Gastrocnemius medialis (tissue), 4 donors: ENCODE measurements at regions of chr12 and their contacts with region 1.

Region 1: GRCh38 chr12:20369305-20370005 is 1.1 kb downstream of the PDE3A start:
- DNase-seq: peak; percentile 33 to 38
- ATAC-seq: peak; percentile 40 to 46
- H3K4me3 ChIP-seq: peak overlapping the region; percentile 69 to 75 (median 72)
- H3K27ac ChIP-seq: peak overlapping the region; percentile 66 to 84 (median 76)
- H3K4me1 ChIP-seq: peaks cover 0 to 3% of the 10 kb centered on the region in 2 donors
- H3K27me3 ChIP-seq: no peaks in the 10 kb centered on the region
- CTCF ChIP-seq: peak in 2 of 5 experiments; percentile 40 to 43
- POLR2A ChIP-seq: peak; percentile 39 to 55

Region 2: DNA sequence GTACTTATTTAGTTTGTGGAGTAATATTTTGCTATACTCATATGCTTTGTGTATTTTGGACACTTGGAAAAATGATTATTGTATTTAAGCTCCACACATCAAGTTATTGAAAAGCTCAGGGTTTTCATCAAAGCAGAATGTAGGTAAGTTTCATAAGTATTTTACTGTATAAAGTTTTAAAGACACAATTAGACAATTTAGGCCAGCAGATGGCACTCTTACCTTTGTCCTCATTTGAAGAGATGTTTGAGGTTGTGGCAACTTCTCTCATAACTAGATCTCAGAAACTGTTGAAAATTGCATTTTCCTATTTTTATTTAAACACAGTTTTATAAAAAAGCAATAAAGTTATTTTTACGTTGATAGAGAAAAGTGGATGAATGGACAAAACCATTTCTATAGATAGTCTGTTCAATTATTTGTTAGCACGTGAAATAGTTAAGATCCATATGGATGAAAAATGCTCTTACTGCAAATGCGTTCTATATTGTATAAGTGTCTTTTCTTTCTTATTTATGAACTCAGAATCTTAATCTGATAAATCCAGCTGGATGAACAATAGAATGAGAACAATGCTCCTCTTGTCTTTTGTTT is 630.2 kb before region 1 on chr12:
- in situ Hi-C with region 1: loop called in 1 of 4 experiments (anchors 25 kb)
- intact Hi-C with region 1: no loop called
- DNase-seq: no peak
- ATAC-seq: no peak
- H3K4me3 ChIP-seq: no peak overlapping the region
- H3K27ac ChIP-seq: no peak overlapping the region
- H3K4me1 ChIP-seq: peaks cover 0 to 2% of the 10 kb centered on the region in 2 donors
- H3K27me3 ChIP-seq: no peaks in the 10 kb centered on the region
- CTCF ChIP-seq: peak in 4 of 5 experiments; percentile 28 to 61 (median 52)
- POLR2A ChIP-seq: no peak

Region 3: GRCh38 chr12:20125276-20125798 is 244.1 kb before region 1 on chr12:
- in situ Hi-C with region 1: no loop called
- intact Hi-C with region 1: loop called (anchors 10 kb)
- DNase-seq: peak in 1 of 2 donors; percentile 15
- ATAC-seq: peak in 1 of 2 donors; percentile 33
- H3K4me3 ChIP-seq: no peak overlapping the region
- H3K27ac ChIP-seq: no peak overlapping the region
- H3K4me1 ChIP-seq: peaks cover 0 to 3% of the 10 kb centered on the region in 2 donors
- H3K27me3 ChIP-seq: no peaks in the 10 kb centered on the region
- CTCF ChIP-seq: no peak
- POLR2A ChIP-seq: no peak

Region 4: DNA sequence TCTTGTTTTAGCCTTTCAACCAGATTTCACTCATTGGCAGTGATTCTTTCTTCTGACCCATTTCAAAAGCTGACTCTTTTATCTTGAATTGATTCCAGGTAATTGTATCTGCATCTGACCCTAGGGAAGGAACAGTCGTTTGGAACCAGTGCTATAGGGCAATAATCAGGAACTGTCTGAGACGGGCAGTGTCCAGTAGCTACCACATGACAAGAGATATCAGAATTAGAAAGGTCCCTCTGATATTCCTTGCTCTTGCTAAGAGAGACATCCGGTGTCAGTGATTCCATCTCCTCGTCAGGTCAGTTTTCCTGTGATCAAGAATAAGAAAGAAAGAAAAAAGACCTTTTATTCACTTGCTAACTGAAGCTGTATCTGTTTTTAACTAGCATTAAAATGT is 48.9 kb before region 1 on chr12:
- in situ Hi-C with region 1: no loop called
- intact Hi-C with region 1: loop called (anchors 2 kb)
- DNase-seq: no peak
- ATAC-seq: peak; percentile 83 to 91
- H3K4me3 ChIP-seq: peak overlapping the region; percentile 32 to 43 (median 35)
- H3K27ac ChIP-seq: peak overlapping the region; percentile 68 to 78 (median 73)
- H3K4me1 ChIP-seq: peaks cover 3 to 9% of the 10 kb centered on the region in 2 donors
- H3K27me3 ChIP-seq: no peaks in the 10 kb centered on the region
- CTCF ChIP-seq: no peak
- POLR2A ChIP-seq: no peak

Region 5: DNA sequence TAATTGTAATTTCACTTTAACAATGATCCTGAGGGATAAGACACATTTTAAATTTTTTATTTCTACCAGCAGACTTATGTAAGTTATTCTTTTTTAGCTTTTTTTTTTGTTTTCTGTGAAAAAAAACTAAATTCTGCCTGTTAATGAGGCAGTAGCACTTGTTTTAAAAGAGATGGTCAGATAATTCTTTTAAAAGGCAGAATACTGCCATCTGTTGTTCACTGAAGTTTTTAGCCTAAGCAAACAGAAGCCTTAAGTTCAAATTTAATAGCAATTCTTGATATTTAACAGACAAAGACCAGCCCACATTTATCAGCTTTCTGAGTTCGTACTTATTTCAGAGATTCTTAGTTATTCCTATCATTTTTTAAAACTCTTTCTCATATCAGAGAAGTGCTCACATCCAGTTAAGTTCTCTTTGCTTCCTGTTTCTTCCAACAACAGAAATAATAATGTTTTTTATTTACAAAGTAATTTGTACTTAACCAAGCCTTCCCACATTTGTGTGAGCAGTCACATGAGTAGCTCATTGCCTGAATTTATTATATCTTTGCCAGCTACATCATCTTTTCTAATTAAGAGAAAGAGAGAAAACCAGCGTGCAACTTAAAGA is 232.3 kb after region 1 on chr12:
- in situ Hi-C with region 1: no loop called
- intact Hi-C with region 1: loop called (anchors 1 kb)
- DNase-seq: no peak
- ATAC-seq: no peak
- H3K4me3 ChIP-seq: no peak overlapping the region
- H3K27ac ChIP-seq: peak overlapping the region in 3 of 4 donors; percentile 27 to 48 (median 36)
- H3K4me1 ChIP-seq: no peaks in the 10 kb centered on the region
- H3K27me3 ChIP-seq: no peaks in the 10 kb centered on the region
- CTCF ChIP-seq: peak in 2 of 5 experiments; percentile 42 to 44
- POLR2A ChIP-seq: no peak